ENCODE measurements at regions of chr1 and their contacts with region 1.

Region 1: GRCh38 chr1:110460253-110461220 is 9.6 kb downstream of the PROK1 start:
- DNase-seq: peak; percentile 83
- H3K4me3 ChIP-seq: peak overlapping the region in 1 of 2 experiments; percentile 26; a peak in 1 of 4 replicates
- H3K27ac ChIP-seq: no peak overlapping the region
- H3K4me1 ChIP-seq: 0 out of 4 replicates have a peak, but pooled peaks cover 0 to 6% of the 10 kb centered on the region in 2 experiments
- H3K27me3 ChIP-seq: no peaks in the 10 kb centered on the region
- CTCF ChIP-seq: peak; percentile 94
- EP300 ChIP-seq: no peak
- RAD21 ChIP-seq: peak; percentile 99

Region 2: GRCh38 chr1:110034451-110035235 is 425.9 kb before region 1 on chr1 and contains the start of gene STRIP1:
- CTCF ChIA-PET with region 1: interaction called, 10 read pairs
- POLR2A ChIA-PET with region 1: no interaction called
- DNase-seq: peak; percentile 91
- H3K4me3 ChIP-seq: peak within 1 kb of the TSS; percentile 62 to 99
- H3K27ac ChIP-seq: peak within 1 kb of the TSS; percentile 89
- H3K4me1 ChIP-seq: peaks cover 4 to 9% of the 10 kb centered on the region in 2 experiments; a peak in 3 of 4 replicates
- H3K27me3 ChIP-seq: no peaks in the 10 kb centered on the region
- CTCF ChIP-seq: no peak
- EP300 ChIP-seq: no peak; a peak in 1 of 4 replicates
- RAD21 ChIP-seq: no peak
- polyA plus RNA-seq, gene STRIP1: 34.6 and 46.3 TPM in 2 replicates

Region 3: DNA sequence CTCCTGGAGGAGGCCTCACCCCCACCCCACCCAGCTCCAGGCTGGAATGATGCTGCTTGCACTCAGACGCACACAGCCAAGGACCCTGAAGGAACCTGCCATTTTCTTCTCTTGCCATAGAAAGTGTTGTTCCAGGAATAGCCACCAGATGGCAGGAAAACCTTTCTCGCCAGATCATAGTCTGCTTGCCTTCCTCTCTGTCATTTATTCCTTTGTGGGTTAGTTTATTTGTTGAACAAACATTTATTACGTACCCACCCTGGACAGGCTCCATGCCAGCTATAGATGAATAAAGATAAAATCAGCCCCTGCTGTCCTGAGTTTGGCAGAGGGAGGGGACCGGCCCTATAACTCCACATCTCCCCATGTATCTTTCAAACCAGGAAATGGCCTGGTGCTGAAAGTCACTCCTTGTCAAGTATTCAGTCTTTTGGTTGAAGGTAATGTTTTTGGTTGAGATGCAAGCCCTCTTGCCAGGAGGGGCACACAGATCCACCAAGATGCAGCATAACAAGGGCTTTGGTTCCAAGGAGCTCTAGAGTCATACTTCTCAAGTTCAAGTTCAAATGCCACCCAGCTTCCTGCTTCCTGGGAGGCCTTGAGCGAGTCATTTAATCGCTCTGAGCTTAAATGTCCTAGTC is 257.4 kb before region 1 on chr1:
- CTCF ChIA-PET with region 1: interaction called, 139 read pairs
- POLR2A ChIA-PET with region 1: no interaction called
- DNase-seq: peak; percentile 72
- H3K4me3 ChIP-seq: no peak overlapping the region; a peak in 1 of 4 replicates
- H3K27ac ChIP-seq: no peak overlapping the region
- H3K4me1 ChIP-seq: peaks cover 0 to 25% of the 10 kb centered on the region in 2 experiments; a peak in 1 of 4 replicates
- H3K27me3 ChIP-seq: no peaks in the 10 kb centered on the region
- CTCF ChIP-seq: peak; percentile 84
- EP300 ChIP-seq: no peak
- RAD21 ChIP-seq: peak; percentile 89

Region 4: DNA sequence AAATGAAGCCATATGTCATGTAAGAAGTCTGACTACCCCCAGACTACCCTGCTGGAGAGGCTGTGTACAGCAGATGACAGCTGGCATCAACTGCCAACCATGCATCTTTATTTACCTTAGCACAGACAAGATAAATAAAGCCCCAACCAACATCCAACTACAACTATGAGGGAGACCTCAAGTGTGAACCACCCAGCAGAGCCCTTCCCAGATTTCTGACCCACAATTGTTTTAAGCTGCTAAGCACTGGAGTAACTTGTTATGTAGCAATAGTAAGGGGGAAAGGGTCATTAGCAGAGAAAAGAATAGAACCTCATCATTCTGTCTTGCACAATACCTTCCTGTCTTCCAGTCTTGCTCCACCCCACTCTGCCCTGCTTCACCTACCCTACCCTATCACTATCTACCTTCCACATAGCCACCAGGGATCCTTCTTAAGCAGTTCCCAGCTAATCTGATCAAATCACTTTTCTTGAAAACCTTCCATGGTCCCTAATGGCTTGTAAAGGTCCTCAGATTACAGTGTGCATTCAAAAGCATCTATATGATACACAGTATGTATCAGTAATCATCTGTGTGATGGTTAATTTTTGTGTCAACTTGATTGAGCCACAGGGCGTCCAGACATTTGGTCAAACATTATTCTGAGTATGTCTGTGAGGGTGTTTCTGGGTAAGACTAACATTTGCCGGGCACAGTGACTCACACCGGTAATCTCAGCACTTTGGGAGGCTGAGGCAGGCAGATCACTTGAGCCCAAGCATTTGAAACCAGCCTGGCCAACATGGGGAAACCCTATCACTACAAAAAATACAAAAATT is 141.0 kb before region 1 on chr1:
- CTCF ChIA-PET with region 1: interaction called, 33 read pairs
- POLR2A ChIA-PET with region 1: no interaction called
- DNase-seq: no peak
- H3K4me3 ChIP-seq: no peak overlapping the region
- H3K27ac ChIP-seq: no peak overlapping the region
- H3K4me1 ChIP-seq: no peaks in the 10 kb centered on the region; a peak in 1 of 4 replicates
- H3K27me3 ChIP-seq: no peaks in the 10 kb centered on the region
- CTCF ChIP-seq: no peak
- EP300 ChIP-seq: no peak
- RAD21 ChIP-seq: no peak

Region 5: DNA sequence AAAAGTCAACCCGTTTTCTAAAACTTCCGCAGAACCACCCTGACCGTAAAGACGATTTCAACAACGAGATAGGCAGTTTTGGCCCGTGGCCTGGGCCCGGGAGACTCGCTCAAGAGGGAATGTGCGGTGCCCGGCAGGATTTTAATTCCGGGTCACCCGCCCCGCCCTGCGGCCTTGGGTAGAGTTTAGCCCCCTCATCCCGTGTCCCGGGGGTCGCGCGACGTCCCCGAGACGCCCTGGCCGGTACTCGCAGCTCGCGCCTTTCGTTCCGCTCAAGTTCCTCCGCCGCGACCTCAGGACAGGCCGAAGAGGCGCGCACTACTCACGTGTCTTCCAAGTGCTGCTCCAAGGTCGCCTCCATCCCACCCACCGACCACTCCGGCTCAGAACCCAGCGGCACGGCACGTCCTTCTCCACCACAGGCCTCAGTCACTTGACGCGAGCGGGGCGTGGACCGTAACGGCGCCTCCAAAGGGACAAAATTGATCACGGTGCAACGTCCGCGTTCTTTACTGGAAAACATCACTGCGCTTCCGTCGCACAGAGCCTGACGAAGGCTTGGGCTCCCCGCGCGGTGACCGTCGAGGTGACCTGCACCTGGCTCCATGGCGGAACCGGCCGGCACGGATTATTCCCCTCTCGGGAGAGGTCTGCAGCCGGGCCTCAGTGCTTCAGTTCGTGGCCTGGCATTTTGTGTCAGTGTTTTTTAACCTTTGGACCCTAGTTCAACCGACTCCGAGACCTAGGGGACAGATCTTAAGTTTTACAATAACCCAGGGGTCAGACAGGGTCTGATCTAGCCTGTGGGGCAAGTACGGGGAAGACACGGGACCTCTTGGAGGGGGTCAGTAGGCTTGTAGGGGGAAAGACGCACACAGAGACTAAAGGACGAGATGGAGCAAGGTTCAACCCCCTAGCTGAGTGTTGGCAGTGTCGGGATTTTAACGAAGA is 53.0 kb before region 1 on chr1 and contains the start of gene LAMTOR5:
- CTCF ChIA-PET with region 1: interaction called, 250 read pairs
- POLR2A ChIA-PET with region 1: interaction called, 3 read pairs
- DNase-seq: peak; percentile 87
- H3K4me3 ChIP-seq: peak within 1 kb of the TSS; percentile 75 to 99
- H3K27ac ChIP-seq: peak within 1 kb of the TSS; percentile 62 to 80
- H3K4me1 ChIP-seq: peaks cover 6 to 15% of the 10 kb centered on the region in 2 experiments; a peak in 3 of 4 replicates
- H3K27me3 ChIP-seq: no peaks in the 10 kb centered on the region
- CTCF ChIP-seq: no peak; the same call in 1 of the 2 replicates
- EP300 ChIP-seq: 0 out of 4 replicates have a peak, but pooled peaks of 1 of the 2 experiments have one; percentile 31
- RAD21 ChIP-seq: peak; percentile 9; the same call in 1 of the 2 replicates
- polyA plus RNA-seq, gene LAMTOR5: 442 and 636 TPM in 2 replicates

Region 6: DNA sequence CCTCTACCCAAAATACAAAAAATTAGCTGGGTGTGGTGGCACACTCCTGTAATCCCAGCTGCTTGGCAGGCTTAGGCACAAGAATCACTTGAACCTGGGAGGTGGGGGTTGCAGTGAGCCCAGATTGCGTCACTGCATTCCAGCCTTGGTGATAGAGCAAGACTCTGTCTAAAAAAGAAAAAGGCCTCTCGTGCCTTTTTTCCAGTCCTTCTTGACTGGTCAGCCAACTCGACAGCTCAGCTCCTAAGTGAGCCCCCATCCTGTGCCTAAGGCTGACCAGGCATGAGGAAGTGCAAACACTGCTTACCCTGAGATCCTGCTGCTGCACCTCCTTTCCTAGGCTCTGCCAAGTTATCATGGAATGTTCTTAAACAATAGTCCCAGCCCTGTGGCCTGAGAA is 19.7 kb before region 1 on chr1:
- CTCF ChIA-PET with region 1: interaction called, 23 read pairs
- POLR2A ChIA-PET with region 1: no interaction called
- DNase-seq: no peak
- H3K4me3 ChIP-seq: no peak overlapping the region
- H3K27ac ChIP-seq: no peak overlapping the region
- H3K4me1 ChIP-seq: no peaks in the 10 kb centered on the region
- H3K27me3 ChIP-seq: peaks cover 17% of the 10 kb centered on the region; the same call in 1 of the 2 replicates
- CTCF ChIP-seq: no peak
- EP300 ChIP-seq: no peak
- RAD21 ChIP-seq: no peak

Region 7: GRCh38 chr1:110482662-110483307 is 22.2 kb after region 1 on chr1:
- CTCF ChIA-PET with region 1: interaction called, 16 read pairs
- POLR2A ChIA-PET with region 1: no interaction called
- DNase-seq: no peak
- H3K4me3 ChIP-seq: no peak overlapping the region
- H3K27ac ChIP-seq: no peak overlapping the region
- H3K4me1 ChIP-seq: peaks cover 0 to 3% of the 10 kb centered on the region in 2 experiments; a peak in 2 of 4 replicates
- H3K27me3 ChIP-seq: no peaks in the 10 kb centered on the region
- CTCF ChIP-seq: no peak
- EP300 ChIP-seq: no peak
- RAD21 ChIP-seq: no peak

Region 8: GRCh38 chr1:110565565-110565964 is 105.0 kb after region 1 on chr1:
- CTCF ChIA-PET with region 1: no interaction called
- POLR2A ChIA-PET with region 1: no interaction called
- DNase-seq: no peak
- H3K4me3 ChIP-seq: no peak overlapping the region
- H3K27ac ChIP-seq: no peak overlapping the region
- H3K4me1 ChIP-seq: no peaks in the 10 kb centered on the region; a peak in 1 of 4 replicates
- H3K27me3 ChIP-seq: no peaks in the 10 kb centered on the region
- CTCF ChIP-seq: no peak
- EP300 ChIP-seq: no peak
- RAD21 ChIP-seq: no peak

Region 9: DNA sequence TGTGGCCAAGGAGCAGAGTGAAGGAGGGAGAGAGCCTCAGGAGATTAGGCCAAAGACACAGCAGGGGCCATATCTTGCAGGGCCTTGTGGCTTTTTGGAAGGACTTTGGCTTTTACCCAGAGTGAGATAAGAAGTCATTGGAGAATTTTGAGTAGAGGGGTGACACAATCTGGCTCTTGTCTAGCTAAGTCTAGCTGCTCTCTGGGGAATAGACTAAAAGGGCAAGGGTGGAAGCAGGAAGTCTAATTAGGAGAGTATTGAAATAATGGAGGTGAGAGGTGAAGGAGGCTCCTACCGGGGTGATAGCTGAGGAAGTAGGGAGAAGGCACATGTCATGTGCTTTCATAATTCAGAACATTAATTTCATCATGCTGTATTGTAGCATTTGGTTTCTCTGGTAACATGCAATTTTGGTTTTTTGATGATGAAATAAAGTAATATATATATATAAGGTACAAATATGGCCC is 248.5 kb after region 1 on chr1:
- CTCF ChIA-PET with region 1: no interaction called
- POLR2A ChIA-PET with region 1: no interaction called
- DNase-seq: no peak
- H3K4me3 ChIP-seq: no peak overlapping the region
- H3K27ac ChIP-seq: no peak overlapping the region
- H3K4me1 ChIP-seq: no peaks in the 10 kb centered on the region
- H3K27me3 ChIP-seq: no peaks in the 10 kb centered on the region
- CTCF ChIP-seq: no peak
- EP300 ChIP-seq: no peak
- RAD21 ChIP-seq: no peak

Region 10: GRCh38 chr1:110746579-110747160 is 286.1 kb after region 1 on chr1:
- CTCF ChIA-PET with region 1: no interaction called
- POLR2A ChIA-PET with region 1: no interaction called
- DNase-seq: no peak
- H3K4me3 ChIP-seq: no peak overlapping the region
- H3K27ac ChIP-seq: no peak overlapping the region
- H3K4me1 ChIP-seq: no peaks in the 10 kb centered on the region
- H3K27me3 ChIP-seq: no peaks in the 10 kb centered on the region
- CTCF ChIP-seq: no peak
- EP300 ChIP-seq: no peak
- RAD21 ChIP-seq: no peak

Measured in SK-N-SH (cell line).